HCT116 (cell line): ENCODE measurements at regions of chr10 and their contacts with region 1.

Region 1: GRCh38 chr10:125048101-125048864 is 106.4 kb downstream of the ZRANB1 start:
- DNase-seq: peak; percentile 88
- ATAC-seq: peak; percentile 87
- H3K4me3 ChIP-seq: no peak overlapping the region
- H3K27ac ChIP-seq: 0 out of 2 replicates have a peak overlapping the region, but pooled peaks have one; percentile 10
- H3K4me1 ChIP-seq: peaks cover 40 to 48% of the 10 kb centered on the region in 2 experiments
- H3K27me3 ChIP-seq: no peaks in the 10 kb centered on the region
- CTCF ChIP-seq: peak in 2 of 3 experiments; percentile 100; a peak in 4 of 6 replicates
- POLR2A ChIP-seq: no peak
- RAD21 ChIP-seq: no peak

Region 2: DNA sequence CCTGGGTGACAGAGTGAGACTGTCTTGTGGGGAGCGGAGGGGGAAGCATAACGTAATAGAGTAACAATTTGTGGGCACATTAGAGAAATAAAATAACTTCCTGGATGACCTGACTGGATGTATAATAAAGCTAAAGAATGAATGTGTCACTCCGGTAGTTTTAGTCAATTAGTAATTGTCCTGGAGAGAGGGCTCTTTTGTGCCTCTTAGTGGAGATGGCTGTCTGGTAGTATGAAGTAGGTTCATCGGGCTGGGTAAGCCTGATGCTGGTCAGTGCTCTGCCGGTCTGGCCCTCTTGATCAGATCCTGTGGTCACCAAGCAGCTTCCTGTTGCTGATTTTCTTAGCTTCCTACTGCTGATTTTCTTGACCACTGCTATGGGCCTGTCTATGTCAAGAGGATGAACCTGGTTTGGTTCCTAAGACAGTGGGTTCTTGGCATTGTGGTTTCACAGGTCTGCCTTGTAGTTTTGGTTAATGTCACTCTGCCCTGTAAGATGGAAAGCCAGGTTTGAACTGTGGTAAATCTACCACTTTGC is 72.2 kb before region 1 on chr10:
- CTCF ChIA-PET with region 1: no interaction called
- POLR2A ChIA-PET with region 1: no interaction called
- RAD21 ChIA-PET with region 1: no interaction called
- intact Hi-C with region 1: no loop called
- DNase-seq: no peak
- ATAC-seq: no peak
- H3K4me3 ChIP-seq: no peak overlapping the region
- H3K27ac ChIP-seq: no peak overlapping the region
- H3K4me1 ChIP-seq: no peaks in the 10 kb centered on the region
- H3K27me3 ChIP-seq: no peaks in the 10 kb centered on the region
- CTCF ChIP-seq: no peak
- POLR2A ChIP-seq: no peak
- RAD21 ChIP-seq: no peak

Region 3: DNA sequence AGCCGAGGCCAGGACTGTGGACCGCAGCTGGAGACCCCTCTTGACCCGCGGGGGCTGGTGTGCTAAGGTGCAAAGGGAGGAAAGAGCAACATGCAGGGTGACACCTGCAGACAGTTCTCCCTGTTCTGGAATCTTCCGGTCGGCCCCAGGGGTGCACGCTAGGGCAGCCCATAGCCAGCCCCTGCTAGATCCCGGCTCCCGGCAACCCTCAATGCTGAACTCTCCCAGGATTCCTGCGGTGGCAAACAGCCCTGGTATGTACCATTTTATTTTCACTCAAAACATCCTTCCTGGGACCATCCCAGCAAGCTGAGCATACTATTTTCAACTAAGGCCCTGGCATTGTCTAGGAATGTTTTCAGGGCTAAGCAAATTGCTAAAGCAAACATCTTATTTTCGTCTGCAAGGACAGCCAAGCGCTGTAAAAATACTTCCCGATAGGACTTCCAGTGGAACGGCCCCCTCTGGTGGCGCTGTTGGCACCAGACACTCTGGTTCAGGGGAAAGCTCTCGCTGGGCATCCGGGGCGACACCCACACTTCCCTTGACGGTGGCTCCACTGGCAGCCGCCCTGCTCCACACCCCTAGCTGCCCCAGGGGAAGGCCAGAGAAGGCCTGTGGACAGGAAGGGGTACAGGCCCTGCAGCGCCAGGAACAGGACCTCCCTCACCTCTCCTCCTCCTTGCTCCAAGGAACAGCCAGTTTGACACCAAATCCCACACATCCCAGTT is 12.7 kb after region 1 on chr10:
- CTCF ChIA-PET with region 1: interaction called, 67 read pairs
- POLR2A ChIA-PET with region 1: interaction called, 4 read pairs
- RAD21 ChIA-PET with region 1: interaction called, 3 to 4 read pairs
- intact Hi-C with region 1: no loop called
- DNase-seq: peak; percentile 40
- ATAC-seq: peak; percentile 84
- H3K4me3 ChIP-seq: no peak overlapping the region
- H3K27ac ChIP-seq: no peak overlapping the region
- H3K4me1 ChIP-seq: peaks cover 39 to 55% of the 10 kb centered on the region in 2 experiments
- H3K27me3 ChIP-seq: no peaks in the 10 kb centered on the region
- CTCF ChIP-seq: peak; percentile 85 to 96 (median 91)
- POLR2A ChIP-seq: no peak
- RAD21 ChIP-seq: peak; percentile 86

Region 4: DNA sequence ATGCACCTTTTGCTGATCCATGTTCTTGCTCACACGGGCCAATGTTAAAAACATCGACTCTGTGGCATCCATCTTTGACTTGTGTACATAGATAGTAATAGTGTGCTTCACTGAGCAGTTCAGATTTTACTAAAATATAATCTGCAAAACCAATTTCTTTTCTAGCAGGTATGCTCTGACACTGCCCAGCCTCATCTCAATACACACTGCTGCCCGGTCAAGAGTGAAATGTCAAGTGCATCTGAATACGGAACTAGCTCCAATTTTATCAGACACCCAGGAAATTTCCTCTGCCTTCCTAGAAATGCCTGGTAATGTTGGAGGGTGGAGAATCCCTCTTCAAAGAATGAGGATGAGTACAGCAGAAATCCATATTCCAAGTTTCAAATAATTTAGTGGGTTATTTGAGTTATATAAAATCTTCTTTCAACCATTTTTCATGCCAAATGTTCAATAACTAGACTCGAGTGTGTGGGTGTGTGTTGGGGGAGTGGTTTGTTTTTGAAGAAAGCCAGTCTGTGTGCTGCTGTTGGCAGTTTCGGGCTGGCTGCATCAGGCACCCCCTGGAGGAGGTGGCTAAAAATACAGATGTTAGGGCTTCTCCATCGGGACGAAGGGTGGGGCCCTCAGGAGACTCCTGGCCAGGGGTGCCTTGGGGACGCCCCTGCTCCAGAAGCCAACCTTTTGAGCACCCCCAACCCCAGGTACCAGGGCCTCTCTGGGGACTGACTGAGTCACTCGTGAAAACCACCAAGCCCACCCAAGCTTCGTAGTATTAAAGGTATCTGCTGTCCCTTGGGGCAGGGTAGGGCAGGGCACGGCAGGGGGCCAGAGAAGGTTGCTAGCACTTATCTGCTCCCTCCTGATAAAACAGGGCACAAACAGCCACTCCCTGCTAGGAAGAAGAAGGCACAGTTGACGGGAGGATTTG is 96.7 kb after region 1 on chr10:
- CTCF ChIA-PET with region 1: no interaction called
- POLR2A ChIA-PET with region 1: no interaction called
- RAD21 ChIA-PET with region 1: no interaction called
- intact Hi-C with region 1: loop called (anchors 1 kb)
- DNase-seq: peak; percentile 61
- ATAC-seq: peak; percentile 93
- H3K4me3 ChIP-seq: peak overlapping the region in 1 of 2 experiments; percentile 5; a peak in 1 of 4 replicates
- H3K27ac ChIP-seq: peak overlapping the region; percentile 6; the same call in 1 of the 2 replicates
- H3K4me1 ChIP-seq: peaks cover 45 to 62% of the 10 kb centered on the region in 2 experiments
- H3K27me3 ChIP-seq: no peaks in the 10 kb centered on the region
- CTCF ChIP-seq: peak; percentile 73 to 78 (median 76); a peak in 5 of 6 replicates
- POLR2A ChIP-seq: no peak
- RAD21 ChIP-seq: peak; percentile 80

Region 5: GRCh38 chr10:125343118-125343925 is 295.0 kb after region 1 on chr10:
- CTCF ChIA-PET with region 1: interaction called, 14 read pairs
- POLR2A ChIA-PET with region 1: no interaction called
- RAD21 ChIA-PET with region 1: interaction called in 1 of 2 experiments, 3 read pairs
- intact Hi-C with region 1: loop called (anchors 1 kb)
- DNase-seq: peak; percentile 51
- ATAC-seq: peak; percentile 90
- H3K4me3 ChIP-seq: no peak overlapping the region
- H3K27ac ChIP-seq: no peak overlapping the region
- H3K4me1 ChIP-seq: no peaks in the 10 kb centered on the region
- H3K27me3 ChIP-seq: no peaks in the 10 kb centered on the region
- CTCF ChIP-seq: peak; percentile 80 to 87 (median 86)
- POLR2A ChIP-seq: no peak
- RAD21 ChIP-seq: peak; percentile 88